B cell (primary cell): ENCODE measurements at regions of chr15 and their contacts with region 1.

Region 1: DNA sequence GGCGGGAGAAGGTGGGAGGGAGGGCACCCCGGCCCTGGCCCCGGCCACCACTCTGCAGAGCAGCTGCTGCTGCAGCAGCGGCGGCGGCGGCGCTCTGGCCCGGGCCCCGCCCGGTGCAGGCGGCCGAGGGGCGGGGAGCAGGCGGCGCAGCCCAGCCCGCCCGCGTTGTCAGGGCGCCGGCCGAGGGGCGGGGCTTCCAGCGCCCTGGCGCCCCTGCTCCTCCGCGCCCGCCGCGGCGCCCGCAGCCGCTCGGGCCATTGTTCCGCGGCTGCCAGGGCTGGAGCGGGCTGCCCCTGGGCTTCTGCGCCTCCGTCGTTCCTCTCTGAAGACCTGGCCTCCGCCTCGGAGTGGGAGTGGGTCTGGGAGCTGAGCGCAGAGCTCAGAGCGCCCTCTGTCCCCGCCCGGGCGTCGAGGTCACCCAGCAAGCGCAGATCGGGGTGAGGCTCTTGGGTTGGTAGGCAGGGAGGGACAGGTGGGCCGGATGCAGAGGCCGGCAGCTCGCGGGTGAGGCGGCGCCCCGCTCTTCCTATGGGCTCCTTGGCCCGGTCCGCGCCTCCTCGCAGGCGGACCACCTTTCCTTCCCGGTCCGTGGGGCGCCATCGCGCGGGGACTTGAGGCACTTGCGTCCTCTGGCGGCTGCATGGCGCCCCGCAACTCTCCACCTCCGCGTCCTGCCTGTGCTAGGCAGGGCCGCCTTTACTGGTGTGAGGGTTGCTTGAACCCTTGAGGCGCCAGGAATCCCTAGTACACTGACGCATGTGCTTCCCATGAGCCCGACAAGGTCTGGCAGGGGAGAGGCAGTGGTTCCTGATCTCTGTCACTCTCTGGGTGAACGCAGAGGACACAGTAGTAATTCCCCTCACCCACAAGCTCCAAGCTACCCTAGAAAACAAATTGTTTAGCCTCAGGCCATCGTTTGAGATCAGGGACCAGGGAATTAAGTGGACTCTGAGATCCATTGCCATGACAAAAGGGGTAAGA is at the start of gene LPCAT4:
- DNase-seq: peak; percentile 94
- ATAC-seq: peak; percentile 84
- H3K4me3 ChIP-seq: peak within 1 kb of the TSS; percentile 38 to 90 (median 66)
- H3K4me3 Mint-ChIP-seq: peak within 1 kb of the TSS; percentile 96
- H3K27ac ChIP-seq: peak within 1 kb of the TSS; percentile 70 to 88
- H3K27ac Mint-ChIP-seq: peak within 1 kb of the TSS; percentile 97
- H3K4me1 ChIP-seq: peaks cover 18 to 28% of the 10 kb centered on the region in 2 donors
- H3K4me1 Mint-ChIP-seq: peaks cover 40% of the 10 kb centered on the region
- H3K27me3 ChIP-seq: no peaks in the 10 kb centered on the region
- H3K27me3 Mint-ChIP-seq: no peaks in the 10 kb centered on the region
- CTCF ChIP-seq: peak; percentile 94
- total RNA-seq, gene LPCAT4: 64.2 and 68.1 TPM in 2 replicates

Region 2: DNA sequence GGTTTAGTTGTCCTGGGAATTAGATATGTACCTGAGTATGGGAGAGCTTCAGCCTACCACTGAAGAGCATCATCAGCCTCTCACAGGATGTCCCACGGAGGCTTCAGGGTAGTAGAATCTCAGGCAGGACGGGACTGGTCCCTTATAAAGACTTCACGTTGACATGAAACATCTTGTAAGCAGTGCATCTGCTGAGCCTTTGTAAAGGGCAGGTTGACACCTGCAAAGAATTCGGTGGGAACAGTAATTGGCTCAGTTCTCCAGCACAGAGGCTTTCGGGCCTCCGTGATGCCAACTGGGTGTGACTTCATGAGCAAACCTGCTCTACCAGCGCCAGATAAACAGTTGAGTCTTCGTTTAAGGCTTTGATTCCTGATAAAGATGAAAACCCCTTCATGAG is 301.4 kb before region 1 on chr15:
- CTCF ChIA-PET with region 1: interaction called, 11 read pairs
- POLR2A ChIA-PET with region 1: no interaction called
- intact Hi-C with region 1: loop called (anchors 1 kb)
- DNase-seq: no peak
- ATAC-seq: no peak
- H3K4me3 ChIP-seq: no peak overlapping the region
- H3K4me3 Mint-ChIP-seq: no peak overlapping the region
- H3K27ac ChIP-seq: no peak overlapping the region
- H3K27ac Mint-ChIP-seq: no peak overlapping the region
- H3K4me1 ChIP-seq: peaks cover 0 to 4% of the 10 kb centered on the region in 2 donors
- H3K4me1 Mint-ChIP-seq: peaks cover 4% of the 10 kb centered on the region
- H3K27me3 ChIP-seq: no peaks in the 10 kb centered on the region
- H3K27me3 Mint-ChIP-seq: no peaks in the 10 kb centered on the region
- CTCF ChIP-seq: no peak

Region 3: GRCh38 chr15:34209421-34210282 is 157.7 kb before region 1 on chr15 and contains the start of gene KATNBL1:
- CTCF ChIA-PET with region 1: interaction called, 15 read pairs
- POLR2A ChIA-PET with region 1: no interaction called
- intact Hi-C with region 1: no loop called
- DNase-seq: peak; percentile 97
- ATAC-seq: peak; percentile 92
- H3K4me3 ChIP-seq: peak within 1 kb of the TSS; percentile 53 to 74 (median 65)
- H3K4me3 Mint-ChIP-seq: peak within 1 kb of the TSS; percentile 93
- H3K27ac ChIP-seq: peak within 1 kb of the TSS; percentile 51 to 80
- H3K27ac Mint-ChIP-seq: peak within 1 kb of the TSS; percentile 89
- H3K4me1 ChIP-seq: peaks cover 9 to 10% of the 10 kb centered on the region in 2 donors
- H3K4me1 Mint-ChIP-seq: peaks cover 15% of the 10 kb centered on the region
- H3K27me3 ChIP-seq: no peaks in the 10 kb centered on the region
- H3K27me3 Mint-ChIP-seq: no peaks in the 10 kb centered on the region
- CTCF ChIP-seq: peak; percentile 85
- total RNA-seq, gene KATNBL1: 54.8 and 57.8 TPM in 2 replicates

Region 4: DNA sequence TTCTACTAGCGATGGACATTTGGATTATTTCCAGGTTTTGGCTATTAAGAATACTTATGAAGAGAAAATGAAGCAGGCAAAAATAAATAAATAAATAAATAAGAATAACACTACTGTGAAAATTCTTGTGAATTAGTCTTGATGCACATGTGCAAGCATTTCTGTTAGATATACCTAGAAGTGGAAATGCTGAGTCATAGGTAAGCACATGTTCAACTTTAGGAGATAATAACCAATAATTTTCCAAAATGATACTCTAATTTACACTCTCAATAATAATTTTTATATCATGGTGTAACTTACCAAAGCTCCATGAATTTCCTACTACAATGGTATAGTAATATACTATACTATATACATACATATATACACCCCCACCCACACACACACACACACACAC is 119.2 kb before region 1 on chr15:
- CTCF ChIA-PET with region 1: interaction called, 129 read pairs
- POLR2A ChIA-PET with region 1: no interaction called
- intact Hi-C with region 1: no loop called
- DNase-seq: no peak
- ATAC-seq: no peak
- H3K4me3 ChIP-seq: no peak overlapping the region
- H3K4me3 Mint-ChIP-seq: no peak overlapping the region
- H3K27ac ChIP-seq: no peak overlapping the region
- H3K27ac Mint-ChIP-seq: no peak overlapping the region
- H3K4me1 ChIP-seq: no peaks in the 10 kb centered on the region
- H3K4me1 Mint-ChIP-seq: no peaks in the 10 kb centered on the region
- H3K27me3 ChIP-seq: no peaks in the 10 kb centered on the region
- H3K27me3 Mint-ChIP-seq: no peaks in the 10 kb centered on the region
- CTCF ChIP-seq: no peak

Region 5: DNA sequence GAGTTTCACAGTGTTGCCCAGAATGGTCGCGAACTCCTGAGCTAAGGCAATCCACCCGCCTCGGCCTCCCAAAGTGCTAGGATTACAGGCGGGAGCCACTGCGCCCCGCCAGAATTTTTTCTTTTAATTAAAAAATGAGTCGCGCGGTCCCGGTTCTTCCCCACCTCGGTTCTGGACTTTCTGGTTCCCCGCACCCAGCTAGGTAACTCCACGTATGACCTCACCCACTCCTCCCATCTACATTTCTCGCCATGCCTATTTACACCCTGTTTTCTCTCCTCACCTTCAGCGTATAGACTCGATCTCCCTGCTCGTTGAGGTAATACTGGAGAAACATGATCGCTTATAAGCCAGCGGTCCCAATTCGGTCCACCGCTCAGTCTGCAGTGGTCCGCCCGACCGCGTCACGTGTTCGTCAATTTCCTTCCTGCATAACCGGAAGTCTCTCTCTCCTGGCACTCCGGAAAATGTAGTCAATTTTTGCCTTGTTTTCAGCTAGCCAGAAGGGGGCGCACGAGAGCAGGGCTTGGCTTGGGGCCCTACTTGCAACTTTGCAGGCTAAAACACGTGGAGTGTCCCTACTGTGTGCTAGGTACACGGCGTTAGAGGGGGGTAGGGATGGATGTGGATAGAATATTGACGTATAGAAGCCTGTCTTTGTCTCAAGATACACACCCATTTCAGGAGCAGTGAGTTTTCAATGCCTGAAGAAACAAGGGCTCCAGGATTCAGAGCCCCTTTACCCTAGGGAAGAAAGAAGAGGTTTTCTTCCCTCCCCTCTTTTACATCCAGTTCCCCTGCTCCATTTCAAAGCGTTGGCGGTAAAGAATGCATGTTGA is 24.4 kb before region 1 on chr15 and contains the starts of genes NOP10 and NUTM1:
- CTCF ChIA-PET with region 1: interaction called, 52 read pairs
- POLR2A ChIA-PET with region 1: interaction called, 23 read pairs
- intact Hi-C with region 1: loop called (anchors 1 kb)
- DNase-seq: peak; percentile 93
- ATAC-seq: peak; percentile 85
- H3K4me3 ChIP-seq: peak within 1 kb of the TSS; percentile 94 to 99 (median 98)
- H3K4me3 Mint-ChIP-seq: peak within 1 kb of the TSS; percentile 85
- H3K27ac ChIP-seq: peak within 1 kb of the TSS; percentile 79 to 81
- H3K27ac Mint-ChIP-seq: peak within 1 kb of the TSS; percentile 63
- H3K4me1 ChIP-seq: peaks cover 16 to 18% of the 10 kb centered on the region in 2 donors
- H3K4me1 Mint-ChIP-seq: peaks cover 20% of the 10 kb centered on the region
- H3K27me3 ChIP-seq: no peaks in the 10 kb centered on the region
- H3K27me3 Mint-ChIP-seq: no peaks in the 10 kb centered on the region
- CTCF ChIP-seq: peak; percentile 97
- total RNA-seq, gene NOP10: 65.6 and 68.2 TPM in 2 replicates
- total RNA-seq, gene NUTM1: not detected in 2 replicates